Activated naive CD4-positive, alpha-beta T cell treated with anti-CD3 and anti-CD28 coated beads for 36 hours (primary cell): ENCODE measurements at regions of chr18 and their contacts with region 1.

Region 1: GRCh38 chr18:69898241-69898861 is 49.3 kb downstream of the CD226 start:
- DNase-seq: peak; percentile 47
- H3K4me3 Mint-ChIP-seq: peak overlapping the region; percentile 75
- H3K27ac Mint-ChIP-seq: peak overlapping the region; percentile 92
- H3K4me1 Mint-ChIP-seq: peaks cover 61% of the 10 kb centered on the region
- H3K27me3 Mint-ChIP-seq: no peaks in the 10 kb centered on the region

Region 2: GRCh38 chr18:69734536-69734935 is 163.8 kb before region 1 on chr18:
- CTCF ChIA-PET with region 1: no interaction called
- intact Hi-C with region 1: loop called (anchors 5 kb)
- DNase-seq: no peak
- H3K4me3 Mint-ChIP-seq: no peak overlapping the region
- H3K27ac Mint-ChIP-seq: no peak overlapping the region
- H3K4me1 Mint-ChIP-seq: no peaks in the 10 kb centered on the region
- H3K27me3 Mint-ChIP-seq: no peaks in the 10 kb centered on the region

Region 3: DNA sequence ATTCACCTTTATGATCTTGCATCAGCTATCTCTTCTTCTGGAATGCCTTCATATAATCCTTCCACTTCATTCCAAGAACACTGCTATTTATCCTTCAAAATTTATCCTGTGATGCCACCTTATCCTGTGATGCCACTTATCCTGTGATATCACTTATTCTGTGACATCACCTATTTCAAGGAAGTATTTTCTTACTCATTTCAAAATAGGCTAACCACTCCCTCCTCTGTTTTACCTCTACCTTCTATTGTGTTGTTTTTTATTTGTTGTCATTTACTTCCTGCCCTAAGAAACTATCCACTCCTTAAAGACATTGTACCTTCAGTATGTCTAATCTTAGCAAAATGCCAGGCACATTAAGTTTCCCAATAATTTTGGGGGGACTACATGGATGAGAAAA is 10.5 kb after region 1 on chr18:
- CTCF ChIA-PET with region 1: interaction called, 5 read pairs
- intact Hi-C with region 1: loop called (anchors 1 kb)
- DNase-seq: no peak
- H3K4me3 Mint-ChIP-seq: no peak overlapping the region
- H3K27ac Mint-ChIP-seq: no peak overlapping the region
- H3K4me1 Mint-ChIP-seq: peaks cover 57% of the 10 kb centered on the region
- H3K27me3 Mint-ChIP-seq: no peaks in the 10 kb centered on the region

Region 4: DNA sequence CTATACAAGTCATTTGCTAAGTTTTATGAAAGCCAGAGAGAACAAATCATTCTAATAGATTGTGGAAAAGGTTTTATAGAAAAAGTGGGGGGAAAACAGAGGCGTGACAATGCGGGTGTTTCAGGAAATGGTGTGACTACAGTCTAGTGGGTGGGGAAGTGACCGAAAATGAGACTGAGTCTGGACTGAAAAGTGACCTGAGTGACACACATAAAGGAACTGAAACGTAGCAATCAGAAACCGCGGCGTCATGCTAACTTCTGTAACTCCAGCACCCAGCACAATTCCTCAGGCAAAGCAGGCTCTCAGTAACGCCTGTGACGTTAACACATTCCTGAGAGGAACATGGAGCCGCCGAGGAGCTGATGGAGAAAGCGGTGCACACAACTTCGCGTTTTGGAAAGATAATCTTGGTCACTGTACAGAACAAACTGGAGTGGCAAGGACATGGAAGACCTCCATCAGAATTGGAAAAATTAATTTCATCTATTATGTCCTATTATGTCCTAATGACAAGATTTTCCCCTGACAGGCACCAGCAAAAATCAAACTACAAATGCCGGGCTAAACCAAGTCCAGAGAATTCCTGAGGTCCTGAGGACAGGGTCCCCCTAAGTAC is 50.7 kb after region 1 on chr18:
- CTCF ChIA-PET with region 1: interaction called, 8 read pairs
- intact Hi-C with region 1: loop called (anchors 1 kb)
- DNase-seq: peak; percentile 83
- H3K4me3 Mint-ChIP-seq: no peak overlapping the region
- H3K27ac Mint-ChIP-seq: no peak overlapping the region
- H3K4me1 Mint-ChIP-seq: peaks cover 46% of the 10 kb centered on the region
- H3K27me3 Mint-ChIP-seq: no peaks in the 10 kb centered on the region

Region 5: DNA sequence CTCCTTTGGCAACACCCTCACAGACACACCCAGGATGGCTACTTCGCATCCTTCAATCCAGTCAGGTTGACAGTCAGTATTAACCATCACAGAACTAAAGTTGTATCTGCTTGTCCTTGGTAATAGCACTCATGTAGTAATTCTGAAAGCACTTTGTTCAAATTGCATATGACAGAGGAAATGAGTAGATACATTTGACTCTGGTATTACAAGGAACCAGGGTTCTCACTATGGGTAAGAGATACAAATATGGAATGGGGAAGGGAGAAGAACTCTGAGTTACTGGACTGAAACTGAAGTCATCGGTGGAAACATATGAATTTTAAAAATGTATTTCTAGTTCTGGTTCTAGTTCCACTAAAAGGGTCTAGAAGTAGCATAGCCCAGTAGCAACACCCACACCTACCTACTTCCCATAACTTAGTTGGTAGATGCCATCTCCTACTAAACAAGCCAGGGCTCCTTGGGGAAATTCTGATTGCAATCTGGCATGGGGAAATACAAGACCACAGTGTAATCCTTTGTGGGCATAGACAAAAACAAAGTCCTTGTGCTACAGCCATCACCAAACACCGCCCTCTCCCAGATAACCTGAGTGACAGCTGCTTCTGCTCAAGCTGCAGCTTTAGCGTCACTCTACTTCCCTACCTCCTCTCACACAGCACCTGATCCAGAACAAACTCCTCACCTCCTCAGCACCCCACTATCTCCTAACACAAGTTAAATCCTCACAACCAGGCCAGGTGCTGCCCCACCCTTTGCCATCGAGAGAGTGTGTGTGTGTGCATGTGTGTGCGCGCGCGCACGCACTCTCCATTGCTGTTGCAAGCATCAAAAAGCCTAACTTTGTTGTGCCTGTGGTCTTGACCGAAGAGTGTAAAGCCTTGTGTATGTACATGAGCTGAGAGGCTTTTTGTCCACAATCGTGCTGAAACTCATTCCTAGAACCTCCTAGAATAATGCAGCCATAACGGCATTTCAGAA is 80.7 kb after region 1 on chr18:
- CTCF ChIA-PET with region 1: no interaction called
- intact Hi-C with region 1: loop called (anchors 1 kb)
- DNase-seq: peak; percentile 27
- H3K4me3 Mint-ChIP-seq: no peak overlapping the region
- H3K27ac Mint-ChIP-seq: peak overlapping the region; percentile 37
- H3K4me1 Mint-ChIP-seq: peaks cover 44% of the 10 kb centered on the region
- H3K27me3 Mint-ChIP-seq: no peaks in the 10 kb centered on the region

Region 6: GRCh38 chr18:71304856-71305255 is 1406.5 kb after region 1 on chr18:
- CTCF ChIA-PET with region 1: no interaction called
- intact Hi-C with region 1: no loop called
- DNase-seq: no peak
- H3K4me3 Mint-ChIP-seq: no peak overlapping the region
- H3K27ac Mint-ChIP-seq: no peak overlapping the region
- H3K4me1 Mint-ChIP-seq: no peaks in the 10 kb centered on the region
- H3K27me3 Mint-ChIP-seq: no peaks in the 10 kb centered on the region